Vagina (tissue), 2 donors: ENCODE measurements at regions of chr15 and their contacts with region 1.

Region 1: GRCh38 chr15:96893159-96893906 is 562.8 kb downstream of the NR2F2 start:
- DNase-seq: no peak
- H3K4me3 ChIP-seq: no peak overlapping the region
- H3K27ac ChIP-seq: peak overlapping the region; percentile 47
- H3K4me1 ChIP-seq: no peaks in the 10 kb centered on the region
- H3K27me3 ChIP-seq: no peaks in the 10 kb centered on the region
- CTCF ChIP-seq: peak; percentile 3 to 48 (median 27)
- POLR2A ChIP-seq: no peak

Region 2: DNA sequence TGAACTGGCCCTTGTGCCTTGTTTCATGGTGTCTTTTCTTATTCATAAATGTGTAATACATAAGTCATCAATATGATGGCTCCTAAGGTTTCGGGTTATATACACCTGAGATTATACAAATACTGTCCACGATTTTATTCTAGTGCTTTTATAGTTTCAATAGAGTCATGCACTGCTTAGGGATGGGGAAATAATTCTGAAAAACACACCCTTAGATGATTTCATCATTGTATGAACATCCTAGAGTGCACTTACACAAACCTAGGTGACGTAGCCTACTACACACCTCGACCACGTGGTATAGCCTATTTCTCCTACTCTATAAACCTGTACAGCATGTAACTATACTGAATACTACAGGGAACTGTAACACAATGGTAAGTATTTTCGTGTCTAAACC is 1551.6 kb before region 1 on chr15:
- intact Hi-C with region 1: no loop called
- DNase-seq: no peak
- H3K4me3 ChIP-seq: no peak overlapping the region
- H3K27ac ChIP-seq: no peak overlapping the region
- H3K4me1 ChIP-seq: no peaks in the 10 kb centered on the region
- H3K27me3 ChIP-seq: no peaks in the 10 kb centered on the region
- CTCF ChIP-seq: no peak
- POLR2A ChIP-seq: no peak

Region 3: DNA sequence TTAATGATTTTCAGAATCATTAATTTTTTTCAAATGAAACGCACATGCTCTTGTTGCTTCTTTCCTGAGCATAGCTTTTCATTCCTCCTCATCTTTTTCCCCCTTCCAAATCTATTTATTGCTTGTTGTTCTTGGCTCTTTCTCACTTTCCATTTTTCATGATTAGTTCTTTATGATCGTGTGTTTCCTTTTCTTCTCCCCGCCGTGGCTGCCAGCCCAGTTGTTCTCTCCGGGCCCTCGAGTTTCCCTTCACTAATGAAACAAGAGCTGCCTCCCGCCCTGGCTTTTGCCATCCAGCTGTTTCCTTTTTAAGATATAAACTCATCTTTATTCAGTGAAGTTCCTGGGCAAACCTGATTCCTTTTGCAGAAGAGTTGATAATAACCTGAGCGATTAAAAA is 733.1 kb before region 1 on chr15:
- intact Hi-C with region 1: loop called (anchors 10 kb)
- DNase-seq: no peak
- H3K4me3 ChIP-seq: peak overlapping the region in 1 of 2 donors; percentile 1
- H3K27ac ChIP-seq: peak overlapping the region; percentile 71
- H3K4me1 ChIP-seq: peaks cover 19% of the 10 kb centered on the region
- H3K27me3 ChIP-seq: no peaks in the 10 kb centered on the region
- CTCF ChIP-seq: no peak
- POLR2A ChIP-seq: no peak

Region 4: GRCh38 chr15:96356494-96357455 is 536.6 kb before region 1 on chr15:
- intact Hi-C with region 1: loop called (anchors 5 kb)
- DNase-seq: peak in 1 of 2 donors; percentile 72
- H3K4me3 ChIP-seq: peak overlapping the region; percentile 59 to 68
- H3K27ac ChIP-seq: peak overlapping the region; percentile 99
- H3K4me1 ChIP-seq: peaks cover 56% of the 10 kb centered on the region
- H3K27me3 ChIP-seq: no peaks in the 10 kb centered on the region
- CTCF ChIP-seq: peak; percentile 88 to 91 (median 88)
- POLR2A ChIP-seq: no peak

Region 5: DNA sequence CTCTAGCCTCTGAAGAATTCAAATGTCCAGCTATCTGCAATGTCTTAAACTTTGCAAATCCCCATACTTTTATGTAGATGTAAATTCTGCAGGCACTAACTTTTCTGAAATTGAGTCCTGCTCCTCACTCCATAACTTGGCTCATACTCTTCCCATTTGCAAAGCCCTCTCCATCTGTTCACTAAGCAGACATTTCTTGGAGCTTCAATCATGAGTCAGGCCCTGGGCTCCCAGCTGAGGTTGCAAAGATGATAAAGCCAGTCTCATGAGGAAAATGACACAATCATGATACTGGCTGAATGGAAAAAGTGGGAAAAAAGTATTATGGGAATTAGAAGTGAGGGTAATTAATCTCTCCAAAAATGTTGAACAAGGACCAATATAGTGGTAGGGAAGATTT is 55.3 kb before region 1 on chr15:
- intact Hi-C with region 1: no loop called
- DNase-seq: no peak
- H3K4me3 ChIP-seq: no peak overlapping the region
- H3K27ac ChIP-seq: no peak overlapping the region
- H3K4me1 ChIP-seq: no peaks in the 10 kb centered on the region
- H3K27me3 ChIP-seq: no peaks in the 10 kb centered on the region
- CTCF ChIP-seq: no peak
- POLR2A ChIP-seq: no peak